ENCODE measurements at regions of chr17 and their contacts with region 1.

Region 1: DNA sequence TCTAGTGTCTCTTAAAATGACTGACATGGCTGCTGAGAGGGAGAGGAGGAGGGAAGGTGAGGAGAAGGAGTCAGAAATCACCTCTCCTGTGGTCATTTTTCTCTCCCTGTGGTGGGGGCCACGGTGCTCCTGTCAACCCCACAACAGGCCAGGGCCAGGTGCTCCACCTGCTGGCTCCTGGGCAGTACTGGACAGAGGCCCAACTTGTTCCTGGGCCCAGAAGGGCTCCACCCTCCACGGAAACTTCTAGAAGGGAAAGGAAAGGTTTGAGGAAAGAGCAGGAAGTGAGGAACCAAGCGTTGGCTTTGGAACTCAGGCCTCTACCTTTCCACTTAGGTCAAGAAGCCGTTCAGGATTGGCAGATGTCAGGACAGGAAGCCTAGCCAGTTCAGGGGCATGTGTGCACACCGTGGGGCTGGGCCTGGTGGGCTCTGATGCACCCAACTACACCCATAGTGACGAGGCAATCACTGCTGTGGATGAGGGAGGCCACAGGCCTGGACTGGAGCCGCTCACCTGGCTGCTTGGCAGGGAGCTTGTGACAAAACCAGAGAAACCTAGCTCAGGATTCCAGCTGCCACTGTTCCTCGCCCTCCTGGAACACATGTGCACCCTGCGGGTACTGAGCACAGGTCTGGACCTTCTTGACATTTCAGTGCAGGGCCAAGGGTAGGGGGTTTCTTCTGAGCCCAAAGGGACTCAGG is 36.1 kb downstream of the WNT3 start:
- DNase-seq: peak; percentile 74
- CTCF ChIP-seq: peak; percentile 70

Region 2: GRCh38 chr17:46832945-46833839 is 50.8 kb after region 1 on chr17:
- in situ Hi-C with region 1: no loop called
- DNase-seq: no peak
- CTCF ChIP-seq: no peak

Region 3: GRCh38 chr17:46876353-46876887 is 94.0 kb after region 1 on chr17:
- in situ Hi-C with region 1: loop called (anchors 25 kb)
- DNase-seq: peak; percentile 56
- CTCF ChIP-seq: no peak

Region 4: DNA sequence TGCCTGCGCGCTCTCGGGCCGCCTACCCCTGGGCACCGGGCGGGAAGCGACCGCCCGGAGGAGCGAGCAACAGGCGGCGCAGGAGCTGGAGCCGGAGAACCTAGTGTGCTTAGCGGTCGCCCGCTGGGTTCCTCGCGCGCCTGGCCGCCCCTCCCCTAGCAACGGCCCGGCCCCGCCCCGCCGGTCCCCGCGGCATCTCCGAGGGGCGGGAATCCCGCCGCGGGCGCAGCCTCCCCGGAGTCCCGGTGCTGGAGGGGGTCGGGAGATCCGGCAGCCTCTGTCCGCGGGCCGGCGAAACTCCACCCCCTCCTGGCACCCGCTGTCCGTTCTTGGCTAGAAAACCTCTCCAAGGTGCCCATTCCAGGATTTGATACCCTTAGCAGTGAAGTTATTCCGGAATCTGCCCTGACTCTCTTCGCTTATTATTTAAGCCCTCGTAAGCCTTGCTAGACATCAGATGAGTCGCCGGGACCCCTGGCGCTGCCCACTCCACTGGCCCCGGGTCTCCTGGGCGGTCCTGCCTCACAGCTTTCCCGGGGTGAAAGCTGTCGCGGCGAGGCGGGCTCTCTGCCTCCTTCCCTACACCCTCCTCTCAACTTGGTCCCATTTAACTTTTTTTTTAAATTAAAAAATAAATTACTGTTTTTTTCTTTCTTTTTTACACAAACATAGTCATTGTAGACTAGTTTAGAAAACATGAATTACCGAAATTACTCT is 196.9 kb after region 1 on chr17 and contains the start of gene RPRML:
- in situ Hi-C with region 1: loop called (anchors 25 kb)
- DNase-seq: peak; percentile 67
- CTCF ChIP-seq: no peak

Region 5: GRCh38 chr17:47145351-47145750 is 362.9 kb after region 1 on chr17:
- in situ Hi-C with region 1: no loop called
- DNase-seq: no peak
- CTCF ChIP-seq: no peak

Region 6: DNA sequence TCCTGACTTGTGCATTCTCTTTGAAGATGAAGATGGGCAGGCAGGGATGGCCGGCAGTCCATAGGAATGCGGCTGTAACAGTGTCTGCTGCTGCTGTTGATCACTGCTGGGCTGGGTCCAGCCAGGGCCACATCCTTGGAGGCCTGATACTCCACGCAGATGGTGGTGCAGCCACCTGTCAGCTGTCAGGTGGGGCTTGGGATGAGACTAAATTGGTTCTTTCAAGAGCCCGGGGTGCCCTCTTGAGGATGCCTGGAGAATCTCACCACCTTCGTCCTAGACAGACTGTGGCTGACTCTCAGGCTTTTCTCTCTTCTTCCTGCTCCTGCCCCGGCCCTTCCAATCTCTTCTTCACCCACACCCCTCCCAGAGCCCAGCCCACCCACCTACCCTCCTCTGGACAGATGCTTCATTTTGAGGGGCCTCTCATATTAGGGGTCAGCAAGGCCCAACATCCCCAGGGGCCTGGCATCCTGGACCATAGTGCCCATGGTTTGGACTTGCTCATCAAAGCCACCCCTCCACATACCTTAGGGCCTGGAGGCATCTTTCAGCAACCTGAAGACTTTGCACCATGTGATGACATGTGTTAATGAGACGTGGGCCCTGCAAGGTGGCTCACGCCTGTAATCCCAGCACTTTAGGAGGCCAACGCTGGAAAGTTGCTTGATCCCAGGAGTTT is 1020.1 kb after region 1 on chr17:
- in situ Hi-C with region 1: no loop called
- DNase-seq: peak; percentile 86
- CTCF ChIP-seq: peak; percentile 71